ENCODE measurements at regions of chr16 and their contacts with region 1.

Region 1: DNA sequence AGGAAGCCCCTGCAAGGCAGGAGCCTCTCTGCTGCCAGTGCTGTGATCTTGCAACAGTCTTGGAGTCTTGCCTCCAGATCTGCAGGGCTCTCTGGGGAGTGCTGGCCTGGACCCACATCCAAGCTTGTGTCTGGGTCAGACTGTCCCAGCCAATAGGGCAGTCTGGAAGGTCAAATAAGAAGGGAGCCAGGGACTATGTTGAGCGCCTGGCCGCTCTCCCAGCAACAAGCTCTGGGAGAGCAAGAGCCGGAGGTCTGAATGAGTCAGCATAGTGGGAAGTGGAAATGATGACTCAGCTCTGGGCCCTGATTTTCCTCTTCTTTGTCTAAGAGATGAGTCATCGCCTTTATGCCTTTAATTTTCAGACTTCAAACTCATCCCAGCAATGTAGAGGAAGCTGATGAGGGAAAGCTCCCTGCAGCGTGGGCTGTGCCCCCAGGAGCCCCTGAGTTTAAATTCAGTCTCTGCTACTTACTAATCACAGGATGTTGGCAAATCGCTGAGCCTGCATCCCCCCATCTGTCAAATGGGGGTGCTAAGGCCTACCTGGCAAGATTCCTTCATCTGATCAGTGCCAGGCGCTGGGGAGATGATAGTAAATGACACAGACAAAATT is 43.6 kb upstream of the HAPSTR1 start:
- DNase-seq: peak; percentile 23
- H3K4me3 Mint-ChIP-seq: no peak overlapping the region
- H3K27ac Mint-ChIP-seq: peak overlapping the region; percentile 70
- H3K4me1 Mint-ChIP-seq: peaks cover 31% of the 10 kb centered on the region
- H3K27me3 Mint-ChIP-seq: no peaks in the 10 kb centered on the region

Region 2: GRCh38 chr16:8963825-8964441 is 83.9 kb before region 1 on chr16 and contains the start of gene USP7:
- intact Hi-C with region 1: loop called (anchors 5 kb)
- DNase-seq: peak; percentile 90
- H3K4me3 Mint-ChIP-seq: peak within 1 kb of the TSS; percentile 91
- H3K27ac Mint-ChIP-seq: peak within 1 kb of the TSS; percentile 38
- H3K4me1 Mint-ChIP-seq: peaks cover 39% of the 10 kb centered on the region
- H3K27me3 Mint-ChIP-seq: peaks cover 7% of the 10 kb centered on the region
- total RNA-seq, gene USP7: 164 and 176 TPM in 2 replicates

Region 3: GRCh38 chr16:9061358-9061813 is 13.6 kb after region 1 on chr16:
- intact Hi-C with region 1: loop called (anchors 2 kb)
- DNase-seq: no peak
- H3K4me3 Mint-ChIP-seq: no peak overlapping the region
- H3K27ac Mint-ChIP-seq: peak overlapping the region; percentile 47
- H3K4me1 Mint-ChIP-seq: peaks cover 10% of the 10 kb centered on the region
- H3K27me3 Mint-ChIP-seq: no peaks in the 10 kb centered on the region

Region 4: GRCh38 chr16:9090960-9091866 is 43.4 kb after region 1 on chr16 and contains the start of gene HAPSTR1:
- intact Hi-C with region 1: loop called (anchors 5 kb)
- DNase-seq: peak; percentile 98
- H3K4me3 Mint-ChIP-seq: peak within 1 kb of the TSS; percentile 98
- H3K27ac Mint-ChIP-seq: peak within 1 kb of the TSS; percentile 95
- H3K4me1 Mint-ChIP-seq: peaks cover 25% of the 10 kb centered on the region
- H3K27me3 Mint-ChIP-seq: no peaks in the 10 kb centered on the region
- total RNA-seq, gene HAPSTR1: 54.5 and 54.9 TPM in 2 replicates

Measured in activated T-helper 2 cell treated with anti-CD3 and anti-CD28 coated beads, Interferon-gamma antibody, Interleukin-2, Interleukin-4, amounts not matched to agents 10 μg/mL and 5 μg/mL and 100 μg/mL, durations not matched to agents 14 hours and 24 hours and 36 hours (primary cell).